Posterior cingulate gyrus (tissue), 11 donors: ENCODE measurements at regions of chr16 and their contacts with region 1.

Region 1: GRCh38 chr16:28491970-28492474 is at the start of gene CLN3:
- DNase-seq: peak; percentile 89 to 99 (median 94)

Region 2: DNA sequence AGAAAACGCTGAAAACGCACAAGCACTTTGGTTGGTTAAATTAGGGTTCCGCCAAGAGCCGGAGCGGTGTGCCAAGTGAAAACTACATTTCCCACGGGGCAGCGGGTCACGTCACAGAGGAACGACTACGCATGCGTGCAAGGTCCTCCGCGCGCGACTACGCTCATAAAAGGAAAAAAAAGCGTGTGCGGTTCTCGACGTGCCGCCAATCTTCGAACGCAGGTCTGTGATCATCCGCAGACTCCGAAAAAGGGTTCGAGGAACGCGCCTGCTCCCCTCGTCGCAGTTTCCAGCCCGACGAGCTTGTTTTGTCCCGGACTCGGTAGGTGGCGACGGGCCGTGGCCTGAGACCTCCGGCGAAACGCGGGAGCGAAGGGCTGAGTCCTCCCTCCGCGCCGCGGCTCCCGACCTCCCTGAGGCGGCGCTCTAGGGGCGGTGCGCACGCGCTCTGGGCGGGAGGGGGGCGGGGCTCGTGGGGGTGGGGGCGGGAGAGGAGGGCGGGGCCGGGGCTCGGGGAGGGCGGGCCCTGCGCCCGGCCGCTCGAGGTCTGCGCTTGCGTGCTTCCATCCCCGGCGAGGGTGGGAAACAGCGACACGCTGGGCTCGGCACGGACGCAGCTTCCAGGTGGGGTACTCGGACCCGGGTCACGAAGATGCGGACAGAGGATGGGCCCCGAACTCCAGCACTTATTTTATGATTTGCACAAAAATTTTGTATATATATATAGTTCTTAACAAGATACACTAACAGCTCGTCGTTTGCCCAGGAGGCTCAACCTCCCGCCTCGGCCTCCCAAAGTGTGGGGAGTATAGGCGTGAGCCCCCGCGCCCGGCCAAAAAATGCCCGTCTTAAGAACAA is 62.0 kb after region 1 on chr16 and contains the start of gene SGF29:
- intact Hi-C with region 1: loop called (anchors 10 kb)
- DNase-seq: peak; percentile 84 to 98 (median 91)

Region 3: DNA sequence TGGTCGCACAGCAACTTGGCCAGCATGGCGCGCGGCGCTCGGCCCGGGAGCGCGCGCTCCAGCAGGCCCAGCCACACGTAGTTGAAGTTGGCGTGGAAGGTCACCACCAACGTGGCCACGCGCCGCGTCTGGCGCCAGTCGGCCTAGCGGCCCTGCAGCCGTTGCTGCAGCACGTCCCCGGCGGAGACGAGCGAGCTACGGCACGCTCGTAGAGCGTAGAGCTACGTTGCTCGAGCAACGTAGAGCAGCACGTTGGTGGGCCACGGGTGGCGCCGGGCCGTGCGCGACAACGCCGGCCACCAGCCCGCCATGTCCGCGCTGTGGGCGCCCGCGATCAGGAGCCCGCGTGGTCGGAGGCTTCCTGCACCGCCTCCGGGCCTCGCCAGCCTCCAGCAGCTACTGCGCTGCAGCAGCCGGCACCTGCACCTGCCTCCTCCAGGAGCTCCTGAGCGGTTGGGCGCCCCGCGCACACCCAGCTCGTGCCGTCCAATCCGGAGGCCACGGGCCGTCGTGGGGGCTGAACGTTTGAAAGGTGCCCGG is 131.2 kb after region 1 on chr16:
- intact Hi-C with region 1: no loop called
- DNase-seq: peak in 9 of 10 donors; percentile 19 to 94 (median 53)